HEK293 (cell line): ENCODE measurements at regions of chr11 and their contacts with region 1.

Region 1: DNA sequence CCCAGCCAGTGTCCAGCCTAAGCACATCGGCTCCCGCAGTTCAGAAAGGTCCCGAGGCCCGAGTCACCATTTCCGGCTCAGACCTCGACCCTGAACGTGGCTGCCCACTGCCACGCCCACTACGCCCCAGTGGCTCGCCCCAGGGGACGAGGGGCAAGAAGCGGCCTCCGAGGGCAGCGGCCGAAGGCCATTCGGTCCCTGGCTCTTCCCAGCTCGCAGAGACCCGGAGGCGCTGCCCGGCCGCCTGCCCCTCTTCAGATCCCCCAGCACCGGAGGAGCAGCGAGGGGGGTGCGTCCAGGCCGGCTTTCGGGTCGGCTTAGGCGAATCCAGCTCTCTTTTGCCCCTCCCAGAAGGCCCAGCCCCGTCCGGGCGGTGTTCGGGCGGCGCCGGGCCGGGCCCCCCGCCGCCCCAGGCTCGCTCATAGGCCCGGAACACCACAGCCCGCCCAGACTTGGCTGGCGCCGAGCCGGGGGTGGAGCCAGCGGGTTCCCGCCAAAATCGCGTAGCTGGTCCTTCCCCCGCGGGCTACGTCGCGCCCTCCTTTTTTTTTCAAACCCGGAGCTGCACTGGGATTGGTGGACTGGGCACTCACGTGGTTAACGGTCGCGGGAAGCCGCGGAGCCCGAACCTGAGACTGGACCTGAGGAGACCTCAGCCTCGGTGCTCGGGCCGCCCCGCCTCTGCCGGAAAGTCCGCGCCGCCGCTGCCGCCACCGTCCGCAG is at the start of gene WEE1:
- H3K4me3 ChIP-seq: peak within 1 kb of the TSS; percentile 100
- H3K27ac ChIP-seq: peak within 1 kb of the TSS; percentile 98
- H3K4me1 ChIP-seq: no peaks in the 10 kb centered on the region
- CTCF ChIP-seq: 0 out of 2 replicates have a peak, but pooled peaks have one; percentile 11

Region 2: GRCh38 chr11:8717876-8718753 is 855.1 kb before region 1 on chr11:
- CTCF ChIA-PET with region 1: no interaction called
- POLR2A ChIA-PET with region 1: no interaction called
- H3K4me3 ChIP-seq: no peak overlapping the region
- H3K27ac ChIP-seq: no peak overlapping the region
- H3K4me1 ChIP-seq: peaks cover 2% of the 10 kb centered on the region; the same call in 1 of the 2 replicates
- CTCF ChIP-seq: no peak

Region 3: DNA sequence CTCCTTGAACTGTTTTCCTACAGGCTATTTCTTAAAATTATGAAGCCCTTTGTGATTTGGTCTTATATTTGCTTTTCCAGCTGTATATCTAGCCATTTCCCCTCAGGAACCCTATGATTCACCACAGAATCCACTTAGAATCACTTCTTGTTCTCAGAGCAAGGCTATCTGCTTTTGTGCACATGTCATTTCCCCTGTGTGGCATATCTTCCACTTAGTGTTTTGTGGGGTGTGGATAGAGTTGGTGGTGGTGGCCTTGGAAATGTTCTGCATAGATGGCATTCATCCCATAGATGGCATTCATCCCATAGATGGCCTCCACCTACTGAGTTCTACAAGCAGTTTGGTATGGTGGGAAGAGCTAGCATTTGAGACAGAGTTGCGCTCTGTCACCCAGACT is 135.3 kb after region 1 on chr11:
- CTCF ChIA-PET with region 1: no interaction called
- POLR2A ChIA-PET with region 1: no interaction called
- H3K4me3 ChIP-seq: no peak overlapping the region
- H3K27ac ChIP-seq: no peak overlapping the region
- H3K4me1 ChIP-seq: no peaks in the 10 kb centered on the region
- CTCF ChIP-seq: no peak

Region 4: DNA sequence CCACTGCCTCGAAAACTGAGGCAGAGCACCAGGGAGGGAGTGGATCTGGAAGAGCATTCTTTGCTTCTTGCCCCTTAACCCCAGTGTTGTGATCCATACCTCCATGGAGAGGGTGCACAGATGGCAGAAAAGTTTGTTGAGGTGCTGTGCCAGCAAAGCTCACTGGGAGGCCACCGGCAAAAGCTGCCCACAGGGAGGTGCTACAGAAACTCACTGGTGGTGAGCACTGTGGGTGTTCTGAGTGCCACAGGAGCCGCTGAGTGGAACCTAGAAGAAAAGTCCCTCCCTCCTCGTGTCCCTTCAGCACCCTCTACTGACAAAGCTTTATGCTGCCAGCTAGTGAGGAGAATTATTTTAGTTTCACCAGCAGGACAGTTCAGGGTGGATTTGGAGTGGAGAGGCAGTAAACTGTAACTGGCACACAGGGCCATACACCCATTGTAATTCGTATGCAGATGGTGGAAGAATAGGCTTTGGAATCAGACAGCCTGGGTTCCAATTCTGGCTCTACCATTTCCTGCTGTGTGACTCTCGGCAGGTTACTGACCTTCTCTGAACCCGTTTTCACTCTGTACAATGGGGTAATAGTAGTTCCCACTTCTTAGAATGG is 175.3 kb after region 1 on chr11:
- CTCF ChIA-PET with region 1: interaction called, 10 read pairs
- POLR2A ChIA-PET with region 1: interaction called, 3 read pairs
- H3K4me3 ChIP-seq: no peak overlapping the region
- H3K27ac ChIP-seq: no peak overlapping the region
- H3K4me1 ChIP-seq: no peaks in the 10 kb centered on the region
- CTCF ChIP-seq: peak; percentile 70; the same call in 1 of the 2 replicates